KBM-7 (cell line): ENCODE measurements at regions of chr21 and their contacts with region 1.

Region 1: DNA sequence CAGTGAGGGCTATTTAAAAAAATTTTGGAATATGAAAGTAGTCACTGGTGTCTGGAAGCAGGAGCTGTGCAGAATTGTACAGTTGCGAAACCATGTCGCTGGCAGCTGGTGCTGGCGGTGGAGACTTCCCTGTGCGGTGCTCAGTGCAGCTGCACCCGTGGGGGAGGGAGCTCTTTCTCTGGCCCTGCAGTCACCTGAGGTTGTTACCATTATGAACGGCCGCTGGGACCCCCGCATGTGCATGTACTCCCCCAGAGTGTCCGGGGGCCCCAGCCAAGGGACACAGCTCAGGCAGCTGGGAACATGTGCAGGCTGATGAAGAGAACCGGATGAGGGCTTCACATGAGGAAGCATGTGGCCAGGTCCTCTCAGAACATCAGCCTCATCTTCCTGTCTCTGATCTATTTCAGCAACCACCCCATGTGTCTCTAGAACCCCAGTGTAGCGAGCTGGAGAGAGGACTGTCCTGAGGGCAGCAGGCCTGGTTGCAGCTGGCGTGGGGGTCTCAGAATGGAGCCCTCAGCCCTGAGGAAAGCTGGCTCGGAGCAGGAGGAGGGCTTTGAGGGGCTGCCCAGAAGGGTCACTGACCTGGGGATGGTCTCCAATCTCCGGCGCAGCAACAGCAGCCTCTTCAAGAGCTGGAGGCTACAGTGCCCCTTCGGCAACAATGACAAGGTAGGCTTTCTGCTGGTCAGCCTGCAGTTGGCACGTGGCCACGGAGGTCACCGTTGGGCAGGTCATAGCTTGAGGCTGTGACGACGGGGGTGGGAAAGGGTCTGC is at the start of gene TRPM2:
- DNase-seq: peak; percentile 92

Region 2: GRCh38 chr21:44267655-44268142 is 85.7 kb before region 1 on chr21:
- in situ Hi-C with region 1: no loop called
- DNase-seq: peak; percentile 27

Region 3: DNA sequence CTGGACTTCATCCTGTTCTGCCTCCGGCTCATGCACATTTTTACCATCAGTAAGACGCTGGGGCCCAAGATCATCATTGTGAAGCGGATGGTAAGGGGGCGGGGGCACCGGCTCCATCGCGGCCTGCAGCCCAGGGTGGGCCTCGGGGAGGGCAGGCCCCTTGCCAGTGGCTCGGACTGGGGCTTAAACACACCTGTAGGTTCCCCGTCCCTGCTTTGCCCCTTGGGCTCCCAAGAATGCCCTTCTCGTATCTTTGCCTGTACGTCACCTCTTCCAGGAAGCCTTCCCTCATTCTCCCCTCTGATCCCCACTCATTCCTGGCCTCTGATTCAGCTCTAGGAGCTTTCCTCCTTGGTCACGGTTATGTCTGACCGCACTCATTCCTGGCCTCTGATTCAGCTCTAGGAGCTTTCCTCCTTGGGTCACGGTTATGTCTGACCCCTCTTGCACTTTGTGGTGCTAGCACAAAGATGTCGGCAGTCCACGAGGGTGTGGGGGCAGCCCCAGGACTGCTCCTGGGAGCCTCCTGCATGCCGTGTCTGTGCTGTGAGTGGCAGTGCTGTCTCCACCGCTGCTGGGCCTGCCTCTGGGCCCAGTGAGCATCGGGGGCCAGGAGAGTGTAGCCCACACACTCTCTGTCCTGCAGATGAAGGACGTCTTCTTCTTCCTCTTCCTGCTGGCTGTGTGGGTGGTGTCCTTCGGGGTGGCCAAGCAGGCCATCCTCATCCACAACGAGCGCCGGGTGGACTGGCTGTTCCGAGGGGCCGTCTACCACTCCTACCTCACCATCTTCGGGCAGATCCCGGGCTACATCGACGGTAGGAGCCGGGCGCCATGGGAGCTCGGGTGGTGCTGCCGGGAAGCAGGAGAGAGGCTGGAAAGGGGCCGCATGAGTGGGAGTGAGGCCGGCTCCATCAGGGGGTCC is 52.8 kb after region 1 on chr21:
- in situ Hi-C with region 1: no loop called
- DNase-seq: no peak

Region 4: DNA sequence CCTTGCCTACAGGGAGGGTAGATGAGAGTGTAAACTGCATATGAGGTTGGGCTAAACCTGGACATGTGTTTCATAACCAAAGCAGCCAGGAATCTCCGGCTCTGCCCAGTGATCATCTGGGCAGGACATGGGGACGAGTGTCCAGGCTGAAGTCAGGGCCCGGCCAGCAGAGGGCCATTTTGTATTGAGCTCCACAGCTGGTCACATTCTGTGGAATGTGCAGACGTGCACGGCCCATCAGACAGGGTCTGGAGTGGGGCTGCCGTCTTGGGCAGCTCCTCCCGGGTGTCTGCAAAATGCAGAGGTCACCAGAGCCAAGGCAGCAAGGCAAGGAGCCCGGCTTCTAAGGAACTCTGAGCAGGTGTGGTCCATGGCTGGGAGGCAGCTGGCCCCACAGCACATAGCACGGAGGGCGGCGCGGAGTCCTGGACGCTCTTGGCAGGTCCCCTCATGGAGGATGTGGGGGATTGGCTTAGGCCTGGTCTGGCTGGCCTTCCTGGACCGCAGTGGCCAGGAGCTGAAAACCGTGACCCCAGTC is 108.2 kb after region 1 on chr21:
- in situ Hi-C with region 1: loop called (anchors 10 kb)
- DNase-seq: no peak

Region 5: DNA sequence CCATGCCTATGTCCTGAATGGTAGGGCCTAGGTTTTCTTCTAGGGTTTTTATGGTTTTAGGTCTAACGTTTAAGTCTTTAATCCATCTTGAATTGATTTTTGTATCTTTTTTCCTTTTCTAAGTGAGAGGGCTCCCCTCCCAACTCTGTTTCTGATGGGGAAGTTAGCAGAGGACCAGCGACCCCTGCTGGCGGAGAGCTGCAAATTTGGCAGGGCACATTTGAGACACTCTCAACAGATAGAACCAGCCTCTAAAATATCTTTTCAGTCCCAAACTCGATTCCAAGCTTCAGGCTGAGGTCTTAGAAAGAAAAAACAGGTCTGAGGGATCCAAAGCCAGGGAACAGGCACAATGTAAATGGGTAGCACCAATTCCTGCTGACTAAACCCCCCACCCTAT is 134.4 kb after region 1 on chr21:
- in situ Hi-C with region 1: no loop called
- DNase-seq: peak; percentile 72

Region 6: GRCh38 chr21:45126204-45126626 is 772.8 kb after region 1 on chr21:
- in situ Hi-C with region 1: no loop called
- DNase-seq: no peak